PC-9 (cell line): ENCODE measurements at regions of chr18 and their contacts with region 1.

Region 1: GRCh38 chr18:44482761-44483160 is 197.9 kb upstream of the SETBP1 start:
- DNase-seq: no peak
- H3K4me3 ChIP-seq: no peak overlapping the region
- H3K27ac ChIP-seq: no peak overlapping the region
- H3K4me1 ChIP-seq: no peaks in the 10 kb centered on the region
- H3K27me3 ChIP-seq: no peaks in the 10 kb centered on the region
- CTCF ChIP-seq: no peak

Region 2: GRCh38 chr18:44089732-44090131 is 393.0 kb before region 1 on chr18:
- CTCF ChIA-PET with region 1: no interaction called
- POLR2A ChIA-PET with region 1: interaction called, 10 read pairs
- intact Hi-C with region 1: no loop called
- DNase-seq: no peak
- H3K4me3 ChIP-seq: no peak overlapping the region
- H3K27ac ChIP-seq: no peak overlapping the region
- H3K4me1 ChIP-seq: no peaks in the 10 kb centered on the region; the same call in 1 of the 2 replicates
- H3K27me3 ChIP-seq: no peaks in the 10 kb centered on the region
- CTCF ChIP-seq: no peak

Region 3: GRCh38 chr18:44709307-44710126 is 226.8 kb after region 1 on chr18:
- CTCF ChIA-PET with region 1: no interaction called
- POLR2A ChIA-PET with region 1: no interaction called
- intact Hi-C with region 1: no loop called
- DNase-seq: no peak
- H3K4me3 ChIP-seq: no peak overlapping the region
- H3K27ac ChIP-seq: no peak overlapping the region
- H3K4me1 ChIP-seq: peaks cover 8% of the 10 kb centered on the region; the same call in 1 of the 2 replicates
- H3K27me3 ChIP-seq: no peaks in the 10 kb centered on the region
- CTCF ChIP-seq: no peak